Dorsolateral prefrontal cortex (tissue), 120 donors: ENCODE measurements at regions of chr1 and their contacts with region 1.

Region 1: DNA sequence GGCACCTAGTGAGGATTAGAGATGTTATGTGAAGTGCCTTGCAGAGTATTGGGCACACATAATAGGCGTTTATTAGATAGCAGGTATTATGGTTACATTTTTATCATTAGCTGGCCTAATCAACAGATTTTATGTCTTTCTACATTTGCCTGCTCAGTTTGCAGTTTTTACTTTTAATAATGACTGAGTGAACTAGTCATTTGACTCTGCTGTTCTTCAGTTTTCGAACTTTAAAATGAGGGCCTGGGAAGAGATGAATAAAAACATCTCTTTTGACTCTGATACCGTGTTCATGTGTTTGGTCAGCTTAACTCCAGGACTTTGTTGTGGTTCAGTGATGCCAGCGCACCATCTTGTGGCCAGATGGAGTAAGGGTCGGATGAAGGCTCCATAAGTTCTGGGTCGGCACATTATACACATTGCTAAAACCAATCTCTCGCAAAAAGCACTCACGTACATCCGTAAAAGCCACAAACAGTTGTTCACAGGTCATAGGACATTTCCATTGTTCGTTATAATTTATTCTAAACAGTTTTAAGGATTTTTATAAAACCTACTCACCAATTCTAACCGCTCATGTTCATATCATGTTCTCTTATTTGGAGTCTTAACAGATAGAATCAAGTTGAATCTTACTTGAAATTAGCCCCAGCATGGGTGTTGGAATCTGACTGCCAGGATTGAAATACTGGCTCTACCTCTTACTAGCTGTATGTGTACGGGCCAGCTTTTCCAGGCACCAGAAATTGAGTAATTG is 78.4 kb upstream of the GPR88 start:
- DNase-seq: peak; percentile 45 to 85 (median 75)
- H3K4me3 ChIP-seq: peak overlapping the region in 1 of 59 donors; percentile 13
- H3K27ac ChIP-seq: peak overlapping the region in 5 of 59 donors; percentile 6 to 58 (median 42)
- H3K27me3 ChIP-seq: no peaks in the 10 kb centered on the region
- CTCF ChIP-seq: peak; percentile 39 to 93 (median 86)

Region 2: GRCh38 chr1:99808391-99809115 is 651.0 kb before region 1 on chr1:
- intact Hi-C with region 1: loop called (anchors 1 to 5 kb)
- DNase-seq: peak in 1 of 10 donors; percentile 8
- H3K4me3 ChIP-seq: peak overlapping the region in 30 of 59 donors; percentile 3 to 46 (median 24)
- H3K27ac ChIP-seq: peak overlapping the region in 1 of 59 donors; percentile 24
- H3K27me3 ChIP-seq: peaks cover 0 to 14% (median 0%) of the 10 kb centered on the region in 45 donors
- CTCF ChIP-seq: peak; percentile 64 to 90 (median 77)

Region 3: GRCh38 chr1:99818063-99818699 is 641.4 kb before region 1 on chr1:
- intact Hi-C with region 1: loop called in 1 of 2 experiments (anchors 5 kb)
- DNase-seq: no peak
- H3K4me3 ChIP-seq: no peak overlapping the region
- H3K27ac ChIP-seq: no peak overlapping the region
- H3K27me3 ChIP-seq: peaks cover 0 to 3% (median 0%) of the 10 kb centered on the region in 45 donors
- CTCF ChIP-seq: no peak

Region 4: GRCh38 chr1:100188617-100189016 is 270.9 kb before region 1 on chr1:
- intact Hi-C with region 1: no loop called
- DNase-seq: peak in 5 of 10 donors; percentile 10 to 44 (median 40)
- H3K4me3 ChIP-seq: peak overlapping the region in 8 of 59 donors; percentile 4 to 24 (median 14)
- H3K27ac ChIP-seq: peak overlapping the region in 52 of 59 donors; percentile 1 to 82 (median 56)
- H3K27me3 ChIP-seq: no peaks in the 10 kb centered on the region
- CTCF ChIP-seq: no peak

Region 5: GRCh38 chr1:100265931-100266740 is 193.4 kb before region 1 on chr1 and contains the start of gene RTCA:
- intact Hi-C with region 1: loop called in 1 of 2 experiments (anchors 10 kb)
- DNase-seq: peak; percentile 92 to 96 (median 95)
- H3K4me3 ChIP-seq: peak within 1 kb of the TSS; percentile 44 to 100 (median 94)
- H3K27ac ChIP-seq: peak within 1 kb of the TSS in 58 of 59 donors; percentile 6 to 94 (median 80)
- H3K27me3 ChIP-seq: no peaks in the 10 kb centered on the region
- CTCF ChIP-seq: peak in 32 of 56 donors; percentile 8 to 59 (median 34)
- total RNA-seq, gene RTCA: 16.4 to 47.7 (median 35.9) TPM

Region 6: GRCh38 chr1:100322436-100323211 is 136.9 kb before region 1 on chr1:
- intact Hi-C with region 1: no loop called
- DNase-seq: no peak
- H3K4me3 ChIP-seq: no peak overlapping the region
- H3K27ac ChIP-seq: no peak overlapping the region
- H3K27me3 ChIP-seq: no peaks in the 10 kb centered on the region
- CTCF ChIP-seq: no peak

Region 7: DNA sequence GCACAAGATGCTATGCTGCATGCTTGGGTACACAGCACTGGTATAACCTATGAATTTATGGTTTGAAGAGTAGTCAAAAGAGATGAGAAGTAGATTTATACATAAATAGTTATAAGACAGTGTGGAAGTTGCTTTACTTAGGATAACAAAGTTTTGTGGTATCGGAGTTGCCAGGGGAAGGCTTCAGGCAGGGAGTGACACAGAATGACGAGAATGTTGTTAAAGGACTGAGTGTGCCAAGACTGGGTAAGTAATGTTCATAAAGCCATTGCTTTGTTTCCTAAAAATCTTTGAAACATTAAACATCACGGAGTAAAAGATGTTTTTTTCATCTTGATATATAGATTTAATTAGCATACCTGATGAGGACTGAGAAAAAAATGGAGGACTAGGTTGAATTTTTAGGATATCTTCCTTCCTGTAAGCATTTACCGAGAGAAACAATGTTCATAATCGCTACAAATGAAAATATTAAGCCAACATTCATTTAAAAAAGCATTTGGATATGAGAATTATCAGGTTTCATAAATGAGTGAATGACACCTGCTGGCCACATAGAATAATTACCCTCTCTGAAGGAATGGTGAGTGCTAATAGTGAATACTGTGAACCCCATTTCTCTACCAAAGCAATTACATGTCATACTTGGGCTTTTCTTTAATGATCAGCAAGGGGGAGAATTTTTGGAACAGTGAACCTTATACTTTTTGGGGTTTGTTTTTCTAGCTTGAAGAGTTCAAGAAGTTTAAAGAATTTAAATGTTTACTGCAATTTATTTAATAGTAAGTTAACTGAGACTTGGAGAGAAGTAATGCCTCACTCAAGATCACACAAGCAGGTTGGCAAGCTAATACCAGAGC is 406.7 kb after region 1 on chr1:
- intact Hi-C with region 1: loop called (anchors 2 to 5 kb)
- DNase-seq: no peak
- H3K4me3 ChIP-seq: no peak overlapping the region
- H3K27ac ChIP-seq: no peak overlapping the region
- H3K27me3 ChIP-seq: peaks cover 0 to 2% (median 0%) of the 10 kb centered on the region in 45 donors
- CTCF ChIP-seq: peak; percentile 41 to 81 (median 62)

Region 8: DNA sequence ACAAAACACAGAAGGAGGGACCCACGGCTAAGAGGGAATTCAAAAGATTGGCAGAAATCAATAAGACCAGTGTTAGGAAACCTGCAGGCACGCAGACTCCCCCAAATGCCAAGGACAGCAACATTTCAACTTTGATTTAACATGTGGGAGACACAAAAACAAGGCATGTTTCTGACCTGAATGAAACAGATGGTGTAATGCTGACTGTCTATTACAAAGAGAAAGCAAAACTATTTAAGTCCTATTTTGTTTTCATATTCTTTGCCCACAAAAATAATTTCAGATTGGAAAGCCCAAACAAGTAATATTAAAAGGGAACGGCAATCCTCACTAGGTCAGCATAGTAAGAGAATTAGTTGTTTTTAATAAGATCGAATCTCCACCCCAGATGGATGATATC is 885.2 kb after region 1 on chr1:
- intact Hi-C with region 1: no loop called
- DNase-seq: no peak
- H3K4me3 ChIP-seq: no peak overlapping the region
- H3K27ac ChIP-seq: no peak overlapping the region
- H3K27me3 ChIP-seq: no peaks in the 10 kb centered on the region
- CTCF ChIP-seq: no peak